ENCODE measurements at regions of chr12 and their contacts with region 1.

Region 1: GRCh38 chr12:53543539-53543938 is 36.3 kb upstream of the NPFF start:
- DNase-seq: peak; percentile 65
- ATAC-seq: peak; percentile 92
- H3K4me3 Mint-ChIP-seq: no peak overlapping the region
- H3K27ac Mint-ChIP-seq: peak overlapping the region; percentile 59
- H3K4me1 Mint-ChIP-seq: peaks cover 10% of the 10 kb centered on the region
- H3K27me3 Mint-ChIP-seq: no peaks in the 10 kb centered on the region

Region 2: GRCh38 chr12:53321074-53321814 is 222.3 kb before region 1 on chr12 and contains the start of gene AAAS:
- CTCF ChIA-PET with region 1: no interaction called
- POLR2A ChIA-PET with region 1: no interaction called
- DNase-seq: peak; percentile 98
- ATAC-seq: peak; percentile 87
- H3K4me3 Mint-ChIP-seq: peak within 1 kb of the TSS; percentile 92
- H3K27ac Mint-ChIP-seq: peak within 1 kb of the TSS; percentile 96
- H3K4me1 Mint-ChIP-seq: peaks cover 47% of the 10 kb centered on the region
- H3K27me3 Mint-ChIP-seq: no peaks in the 10 kb centered on the region
- total RNA-seq, gene AAAS: 67.5 to 67.9 TPM

Region 3: GRCh38 chr12:53518381-53518780 is 25.2 kb before region 1 on chr12:
- CTCF ChIA-PET with region 1: interaction called, 16 read pairs
- POLR2A ChIA-PET with region 1: no interaction called
- DNase-seq: no peak
- ATAC-seq: no peak
- H3K4me3 Mint-ChIP-seq: no peak overlapping the region
- H3K27ac Mint-ChIP-seq: no peak overlapping the region
- H3K4me1 Mint-ChIP-seq: peaks cover 16% of the 10 kb centered on the region
- H3K27me3 Mint-ChIP-seq: no peaks in the 10 kb centered on the region

Region 4: DNA sequence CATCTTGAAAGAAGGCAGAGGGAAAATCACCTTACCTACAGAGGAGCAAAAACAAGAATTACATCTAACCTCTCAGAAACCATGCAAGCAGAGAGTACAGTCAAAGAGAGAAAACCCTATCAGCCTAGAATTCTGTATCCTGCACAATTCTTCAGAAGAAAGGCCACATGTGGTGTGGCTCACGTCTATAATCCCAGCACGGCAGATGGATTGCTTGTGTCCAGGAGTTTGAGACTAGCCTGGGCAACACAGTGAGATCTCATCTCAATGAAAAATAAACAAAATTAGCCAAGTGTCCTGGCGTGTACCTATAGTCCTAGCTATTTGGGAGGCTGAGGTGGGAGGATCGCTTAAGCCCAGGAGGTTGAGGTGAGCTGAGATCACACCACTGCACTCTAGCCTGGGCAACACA is 34.4 kb after region 1 on chr12:
- CTCF ChIA-PET with region 1: no interaction called
- POLR2A ChIA-PET with region 1: no interaction called
- DNase-seq: no peak
- ATAC-seq: no peak
- H3K4me3 Mint-ChIP-seq: no peak overlapping the region
- H3K27ac Mint-ChIP-seq: no peak overlapping the region
- H3K4me1 Mint-ChIP-seq: peaks cover 17% of the 10 kb centered on the region
- H3K27me3 Mint-ChIP-seq: no peaks in the 10 kb centered on the region

Region 5: GRCh38 chr12:53591301-53592206 is 48.0 kb after region 1 on chr12:
- CTCF ChIA-PET with region 1: interaction called, 16 read pairs
- POLR2A ChIA-PET with region 1: no interaction called
- DNase-seq: no peak
- ATAC-seq: no peak
- H3K4me3 Mint-ChIP-seq: no peak overlapping the region
- H3K27ac Mint-ChIP-seq: no peak overlapping the region
- H3K4me1 Mint-ChIP-seq: peaks cover 4% of the 10 kb centered on the region
- H3K27me3 Mint-ChIP-seq: no peaks in the 10 kb centered on the region

Region 6: GRCh38 chr12:53613821-53614220 is 70.3 kb after region 1 on chr12:
- CTCF ChIA-PET with region 1: interaction called, 11 read pairs
- POLR2A ChIA-PET with region 1: no interaction called
- DNase-seq: no peak
- ATAC-seq: no peak
- H3K4me3 Mint-ChIP-seq: no peak overlapping the region
- H3K27ac Mint-ChIP-seq: no peak overlapping the region
- H3K4me1 Mint-ChIP-seq: peaks cover 31% of the 10 kb centered on the region
- H3K27me3 Mint-ChIP-seq: no peaks in the 10 kb centered on the region

Region 7: GRCh38 chr12:53625946-53626701 is 82.6 kb after region 1 on chr12 and contains the start of gene ATF7:
- CTCF ChIA-PET with region 1: interaction called, 19 read pairs
- POLR2A ChIA-PET with region 1: no interaction called
- DNase-seq: peak; percentile 98
- ATAC-seq: peak; percentile 98
- H3K4me3 Mint-ChIP-seq: peak within 1 kb of the TSS; percentile 98
- H3K27ac Mint-ChIP-seq: peak within 1 kb of the TSS; percentile 96
- H3K4me1 Mint-ChIP-seq: peaks cover 32% of the 10 kb centered on the region
- H3K27me3 Mint-ChIP-seq: no peaks in the 10 kb centered on the region
- total RNA-seq, gene ATF7: 27.7 to 28.7 TPM

Measured in activated CD8-positive, alpha-beta T cell treated with anti-CD3 and anti-CD28 coated beads, Interleukin-2, amount 10 ng/mL, durations not matched to agents 7 days and 5 days (primary cell).